Prostate gland (tissue), 2 donors: ENCODE measurements at regions of chr17 and their contacts with region 1.

Region 1: GRCh38 chr17:67689534-67690177 is 28.1 kb upstream of the NOL11 start:
- DNase-seq: peak; percentile 74
- H3K4me3 ChIP-seq: no peak overlapping the region
- H3K27ac ChIP-seq: no peak overlapping the region
- H3K4me1 ChIP-seq: no peaks in the 10 kb centered on the region
- H3K27me3 ChIP-seq: no peaks in the 10 kb centered on the region
- CTCF ChIP-seq: peak; percentile 42 to 90 (median 87)
- POLR2A ChIP-seq: no peak

Region 2: DNA sequence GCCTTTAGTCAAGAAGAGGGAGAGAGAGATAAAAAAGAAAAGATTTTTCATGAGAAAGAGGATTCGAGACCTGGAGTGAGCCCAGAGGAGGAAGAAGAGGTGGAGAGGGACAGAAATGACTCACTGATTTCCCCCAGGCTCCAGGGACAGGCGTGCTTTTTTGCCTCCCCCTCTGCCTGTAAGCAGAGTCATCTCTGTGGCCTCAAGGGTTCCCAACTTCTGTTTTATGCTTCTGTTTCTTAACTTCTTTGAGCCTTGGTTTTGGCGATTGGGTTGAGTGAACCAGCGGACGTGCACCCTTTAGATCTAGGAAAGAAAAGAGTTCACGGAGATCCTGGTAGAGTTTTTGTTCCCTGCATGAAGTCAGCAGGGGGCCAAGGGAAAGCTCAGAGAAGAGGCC is 119.8 kb before region 1 on chr17:
- intact Hi-C with region 1: loop called (anchors 10 kb)
- DNase-seq: no peak
- H3K4me3 ChIP-seq: no peak overlapping the region
- H3K27ac ChIP-seq: no peak overlapping the region
- H3K4me1 ChIP-seq: no peaks in the 10 kb centered on the region
- H3K27me3 ChIP-seq: no peaks in the 10 kb centered on the region
- CTCF ChIP-seq: no peak
- POLR2A ChIP-seq: no peak